Ovary (tissue), 10 donors: ENCODE measurements at regions of chr3 and their contacts with region 1.

Region 1: GRCh38 chr3:54324103-54324502 is 201.8 kb downstream of the CACNA2D3 start:
- DNase-seq: no peak
- H3K4me3 ChIP-seq: no peak overlapping the region
- H3K27ac ChIP-seq: no peak overlapping the region
- H3K4me1 ChIP-seq: no peaks in the 10 kb centered on the region
- H3K27me3 ChIP-seq: no peaks in the 10 kb centered on the region
- CTCF ChIP-seq: no peak
- EP300 ChIP-seq: no peak
- POLR2A ChIP-seq: no peak

Region 2: GRCh38 chr3:54349691-54350090 is 25.6 kb after region 1 on chr3:
- intact Hi-C with region 1: loop called in 1 of 4 experiments (anchors 2 kb)
- DNase-seq: no peak
- H3K4me3 ChIP-seq: no peak overlapping the region
- H3K27ac ChIP-seq: no peak overlapping the region
- H3K4me1 ChIP-seq: peaks cover 9% of the 10 kb centered on the region
- H3K27me3 ChIP-seq: no peaks in the 10 kb centered on the region
- CTCF ChIP-seq: no peak
- EP300 ChIP-seq: no peak
- POLR2A ChIP-seq: no peak